Ovary (tissue), 10 donors: ENCODE measurements at regions of chrX and their contacts with region 1.

Region 1: DNA sequence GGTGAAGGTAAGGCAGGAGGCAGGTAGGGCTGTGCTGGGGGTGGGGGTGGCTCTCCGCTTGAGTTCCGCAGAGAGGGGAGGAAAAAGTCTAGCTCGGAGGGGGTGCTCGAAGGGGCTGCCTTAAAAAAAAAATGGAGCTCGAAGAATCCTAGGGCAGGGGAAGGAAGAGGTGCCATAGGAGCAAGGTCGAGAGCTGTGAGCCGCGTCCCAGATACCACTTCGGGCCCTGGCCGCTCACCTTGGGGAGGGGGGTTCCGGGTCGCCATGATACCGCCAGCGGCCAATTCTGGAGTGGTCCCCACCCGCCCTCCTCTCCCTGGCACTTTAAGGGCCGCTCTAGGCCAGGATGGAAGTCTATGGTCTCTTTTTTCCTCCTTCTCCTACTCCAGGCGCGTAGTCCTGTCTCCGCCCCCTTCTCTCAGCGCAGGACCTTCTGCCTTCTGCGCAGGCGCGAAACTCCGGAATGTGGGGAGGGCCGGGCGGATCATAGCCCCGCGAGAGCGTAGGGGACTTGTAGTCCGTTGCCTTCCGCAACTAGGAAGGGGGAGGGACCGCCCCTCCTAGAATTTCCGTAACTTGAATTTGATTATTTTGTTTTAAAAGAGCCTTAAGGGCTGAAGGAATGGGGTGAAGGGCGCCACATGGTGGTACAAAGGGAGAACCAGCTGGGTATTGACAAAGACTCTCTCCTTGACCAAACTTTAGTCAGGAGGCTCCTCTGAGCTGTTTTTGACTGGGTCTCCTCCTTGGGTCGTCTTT is at the start of gene FUNDC1:
- DNase-seq: peak; percentile 94 to 98 (median 97)
- H3K4me3 ChIP-seq: peak within 1 kb of the TSS; percentile 62
- H3K27ac ChIP-seq: peak within 1 kb of the TSS in 1 of 2 donors; percentile 58
- H3K4me1 ChIP-seq: peaks cover 6% of the 10 kb centered on the region
- H3K27me3 ChIP-seq: no peaks in the 10 kb centered on the region
- CTCF ChIP-seq: peak in 1 of 3 donors; percentile 22
- EP300 ChIP-seq: no peak
- POLR2A ChIP-seq: no peak
- total RNA-seq, gene FUNDC1: 10.6 to 19.4 (median 14.4) TPM

Region 2: GRCh38 chrX:43958529-43958928 is 584.2 kb before region 1 on chrX:
- intact Hi-C with region 1: loop called in 1 of 4 experiments (anchors 10 kb)
- DNase-seq: peak in 2 of 5 donors; percentile 30 to 39
- H3K4me3 ChIP-seq: no peak overlapping the region
- H3K27ac ChIP-seq: peak overlapping the region in 1 of 2 donors; percentile 8
- H3K4me1 ChIP-seq: peaks cover 12% of the 10 kb centered on the region
- H3K27me3 ChIP-seq: no peaks in the 10 kb centered on the region
- CTCF ChIP-seq: peak in 2 of 3 donors; percentile 75 to 77
- EP300 ChIP-seq: no peak
- POLR2A ChIP-seq: no peak

Region 3: GRCh38 chrX:44305921-44306735 is 236.6 kb before region 1 on chrX:
- intact Hi-C with region 1: no loop called
- DNase-seq: no peak
- H3K4me3 ChIP-seq: no peak overlapping the region
- H3K27ac ChIP-seq: no peak overlapping the region
- H3K4me1 ChIP-seq: no peaks in the 10 kb centered on the region
- H3K27me3 ChIP-seq: no peaks in the 10 kb centered on the region
- CTCF ChIP-seq: no peak
- EP300 ChIP-seq: no peak
- POLR2A ChIP-seq: no peak

Region 4: GRCh38 chrX:44872817-44873414 is 330.2 kb after region 1 on chrX and contains the start of gene KDM6A:
- intact Hi-C with region 1: loop called in 1 of 4 experiments (anchors 5 kb)
- DNase-seq: peak; percentile 99 to 100 (median 100)
- H3K4me3 ChIP-seq: peak within 1 kb of the TSS; percentile 78
- H3K27ac ChIP-seq: peak within 1 kb of the TSS; percentile 98 to 99
- H3K4me1 ChIP-seq: no peaks in the 10 kb centered on the region
- H3K27me3 ChIP-seq: no peaks in the 10 kb centered on the region
- CTCF ChIP-seq: no peak
- EP300 ChIP-seq: no peak
- POLR2A ChIP-seq: peak; percentile 78
- total RNA-seq, gene KDM6A: 32.4 to 56.2 (median 42.9) TPM